ENCODE measurements at regions of chr1 and their contacts with region 1.

Region 1: DNA sequence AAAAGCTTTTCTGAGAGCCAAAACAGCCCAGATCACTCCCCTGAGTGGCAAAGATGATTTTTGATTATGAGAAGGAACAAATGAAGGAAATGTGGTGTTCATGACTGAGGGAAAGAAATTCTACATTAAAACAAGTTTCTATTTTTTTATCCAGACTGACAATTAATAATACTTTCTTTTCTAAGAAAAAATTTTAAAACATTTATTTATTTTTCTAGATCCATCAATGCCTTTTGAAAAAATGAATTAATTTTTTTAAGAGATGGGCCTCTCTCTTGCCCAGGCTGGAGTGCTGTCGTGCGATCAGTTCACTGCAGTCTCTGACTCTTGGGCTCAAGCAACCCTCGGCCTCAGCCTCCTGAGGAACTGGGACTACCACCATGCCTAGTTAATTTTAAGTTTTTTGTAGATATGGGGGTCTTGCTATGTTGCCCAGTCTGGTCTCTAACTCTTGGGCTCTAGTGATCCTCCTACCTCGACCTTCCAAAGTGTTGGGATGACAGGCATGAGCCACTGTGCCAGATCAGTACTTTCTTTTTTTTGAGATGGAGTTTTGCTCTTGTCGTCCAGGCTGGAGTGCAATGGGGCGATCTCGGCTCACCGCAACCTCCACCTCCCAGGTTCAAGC is 11.2 kb upstream of the TXNIP start:
- DNase-seq: no peak
- ATAC-seq: no peak
- H3K4me3 ChIP-seq: no peak overlapping the region
- H3K27ac ChIP-seq: no peak overlapping the region
- H3K4me1 ChIP-seq: 0 out of 2 replicates have a peak, but pooled peaks cover 2% of the 10 kb centered on the region
- H3K27me3 ChIP-seq: no peaks in the 10 kb centered on the region
- CTCF ChIP-seq: no peak
- POLR2A ChIP-seq: no peak
- RAD21 ChIP-seq: no peak

Region 2: GRCh38 chr1:145972580-145972979 is 35.0 kb before region 1 on chr1:
- CTCF ChIA-PET with region 1: interaction called, 29 read pairs
- POLR2A ChIA-PET with region 1: no interaction called
- dilution Hi-C with region 1: no loop called
- in situ Hi-C with region 1: loop called (anchors 5 kb)
- intact Hi-C with region 1: loop called (anchors 1 kb)
- DNase-seq: no peak
- ATAC-seq: no peak; the same call in 1 of the 2 replicates
- H3K4me3 ChIP-seq: no peak overlapping the region
- H3K27ac ChIP-seq: no peak overlapping the region
- H3K4me1 ChIP-seq: no peaks in the 10 kb centered on the region
- H3K27me3 ChIP-seq: no peaks in the 10 kb centered on the region
- CTCF ChIP-seq: no peak
- POLR2A ChIP-seq: no peak
- RAD21 ChIP-seq: no peak

Measured in IMR-90 (cell line).